MCF 10A (cell line): ENCODE measurements at regions of chr6 and their contacts with region 1.

Region 1: GRCh38 chr6:52407467-52407866 is 12.7 kb upstream of the EFHC1 start:
- DNase-seq: peak; percentile 60
- H3K4me3 Mint-ChIP-seq: no peak overlapping the region
- H3K27ac Mint-ChIP-seq: no peak overlapping the region
- H3K4me1 Mint-ChIP-seq: peaks cover 15% of the 10 kb centered on the region
- H3K27me3 Mint-ChIP-seq: no peaks in the 10 kb centered on the region
- CTCF ChIP-seq: peak; percentile 51

Region 2: DNA sequence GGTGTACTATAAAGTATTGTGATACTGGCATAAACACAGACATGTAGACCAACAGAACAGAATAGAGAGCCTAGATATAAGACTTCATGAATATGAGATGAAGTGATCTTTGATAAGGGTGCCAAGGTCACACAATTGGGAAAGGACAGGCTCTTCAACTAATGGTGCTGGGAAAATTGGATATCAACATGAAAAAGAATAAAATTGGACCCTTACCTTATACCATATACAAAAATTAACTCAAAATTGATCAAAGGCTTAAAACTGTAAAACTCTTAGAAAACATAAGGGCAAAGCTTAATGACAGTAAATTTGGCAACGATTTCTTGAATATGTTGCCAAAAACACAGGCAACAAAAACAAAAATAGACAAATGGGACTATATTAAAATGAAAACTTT is 214.2 kb after region 1 on chr6:
- CTCF ChIA-PET with region 1: no interaction called
- POLR2A ChIA-PET with region 1: no interaction called
- intact Hi-C with region 1: no loop called
- DNase-seq: no peak
- H3K4me3 Mint-ChIP-seq: no peak overlapping the region
- H3K27ac Mint-ChIP-seq: no peak overlapping the region
- H3K4me1 Mint-ChIP-seq: peaks cover 6% of the 10 kb centered on the region
- H3K27me3 Mint-ChIP-seq: no peaks in the 10 kb centered on the region
- CTCF ChIP-seq: no peak

Region 3: DNA sequence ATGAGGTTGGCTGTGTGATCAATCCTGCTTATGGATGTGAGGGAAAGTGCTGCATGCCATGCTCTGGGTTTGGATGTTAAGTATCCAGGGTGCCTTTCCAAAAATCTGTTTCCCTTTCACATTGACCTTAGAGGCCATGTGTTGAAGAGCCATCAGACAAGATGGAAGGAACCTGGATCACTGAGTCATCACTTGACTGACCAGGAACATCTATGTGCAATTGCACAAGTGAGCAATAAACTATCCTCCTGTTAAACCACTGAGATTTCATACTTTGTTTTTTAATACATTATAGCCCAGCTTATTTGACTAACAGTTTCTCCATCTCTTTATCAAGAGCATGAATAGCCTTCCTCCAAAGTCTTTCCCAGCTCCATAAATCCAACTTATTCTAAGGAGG is 245.7 kb after region 1 on chr6:
- CTCF ChIA-PET with region 1: interaction called, 112 read pairs
- POLR2A ChIA-PET with region 1: interaction called, 3 read pairs
- intact Hi-C with region 1: no loop called
- DNase-seq: no peak
- H3K4me3 Mint-ChIP-seq: no peak overlapping the region
- H3K27ac Mint-ChIP-seq: no peak overlapping the region
- H3K4me1 Mint-ChIP-seq: no peaks in the 10 kb centered on the region
- H3K27me3 Mint-ChIP-seq: no peaks in the 10 kb centered on the region
- CTCF ChIP-seq: no peak

Region 4: DNA sequence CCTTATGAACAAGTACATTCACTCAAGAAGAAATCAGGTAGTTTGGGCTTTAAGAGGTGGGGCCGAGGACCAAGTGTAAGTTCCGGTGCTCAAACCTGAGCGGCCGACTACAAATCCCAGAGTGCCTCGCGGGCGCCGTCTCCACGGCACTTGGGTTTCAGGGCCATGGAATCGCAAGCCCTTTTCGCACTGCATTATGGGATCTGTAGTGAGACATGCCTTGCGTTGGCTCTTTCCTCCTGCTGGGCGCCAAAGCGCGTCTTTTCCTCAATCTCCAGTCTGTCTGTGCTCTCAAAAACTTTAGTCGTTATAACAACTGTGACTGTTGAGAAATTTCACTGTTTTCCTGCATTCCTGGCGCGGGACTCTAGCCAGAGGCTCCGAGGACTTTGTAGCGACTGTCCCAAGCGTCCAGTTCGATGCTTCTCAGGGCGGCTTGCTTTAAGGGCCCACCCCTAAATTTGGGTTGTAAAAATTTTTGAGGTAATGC is 657.3 kb after region 1 on chr6:
- CTCF ChIA-PET with region 1: no interaction called
- POLR2A ChIA-PET with region 1: interaction called, 3 read pairs
- intact Hi-C with region 1: loop called (anchors 1 kb)
- DNase-seq: peak; percentile 98
- H3K4me3 Mint-ChIP-seq: peak overlapping the region; percentile 95
- H3K27ac Mint-ChIP-seq: peak overlapping the region; percentile 88
- H3K4me1 Mint-ChIP-seq: peaks cover 23% of the 10 kb centered on the region
- H3K27me3 Mint-ChIP-seq: no peaks in the 10 kb centered on the region
- CTCF ChIP-seq: no peak